AG04450 (cell line): ENCODE measurements at regions of chr12 and their contacts with region 1.

Region 1: GRCh38 chr12:92987362-92987761 is 58.3 kb upstream of the EEA1 start:
- DNase-seq: peak; percentile 55
- H3K4me3 ChIP-seq: no peak overlapping the region
- H3K27ac ChIP-seq: no peak overlapping the region
- H3K27me3 ChIP-seq: no peaks in the 10 kb centered on the region
- CTCF ChIP-seq: peak; percentile 58

Region 2: GRCh38 chr12:92178340-92178739 is 809.0 kb before region 1 on chr12:
- CTCF ChIA-PET with region 1: no interaction called
- POLR2A ChIA-PET with region 1: no interaction called
- DNase-seq: no peak
- H3K4me3 ChIP-seq: no peak overlapping the region
- H3K27ac ChIP-seq: no peak overlapping the region
- H3K27me3 ChIP-seq: no peaks in the 10 kb centered on the region
- CTCF ChIP-seq: no peak

Region 3: GRCh38 chr12:92784795-92785562 is 202.4 kb before region 1 on chr12:
- CTCF ChIA-PET with region 1: interaction called, 10 read pairs
- POLR2A ChIA-PET with region 1: no interaction called
- DNase-seq: peak; percentile 55
- H3K4me3 ChIP-seq: no peak overlapping the region
- H3K27ac ChIP-seq: peak overlapping the region; percentile 73
- H3K27me3 ChIP-seq: no peaks in the 10 kb centered on the region
- CTCF ChIP-seq: peak; percentile 56

Region 4: DNA sequence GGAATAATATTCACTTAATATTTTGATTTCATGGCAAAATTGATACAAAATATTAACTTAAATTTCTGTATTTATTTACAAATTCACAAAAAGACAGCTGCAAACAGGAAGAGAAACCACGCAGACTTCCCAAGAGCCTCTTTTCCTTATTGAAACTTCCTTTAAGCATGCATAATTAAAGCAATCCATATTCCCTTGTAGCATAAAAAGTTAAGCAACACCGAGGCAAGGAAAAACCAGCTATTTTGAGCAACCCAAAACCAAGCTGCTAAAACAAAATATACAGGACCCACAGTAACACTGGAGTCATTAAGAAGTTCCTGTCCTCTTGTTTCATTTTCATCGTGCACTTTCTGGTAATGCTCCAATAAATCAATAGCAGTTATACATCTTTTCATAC is 116.2 kb before region 1 on chr12:
- CTCF ChIA-PET with region 1: no interaction called
- POLR2A ChIA-PET with region 1: no interaction called
- DNase-seq: no peak
- H3K4me3 ChIP-seq: no peak overlapping the region
- H3K27ac ChIP-seq: no peak overlapping the region
- H3K27me3 ChIP-seq: no peaks in the 10 kb centered on the region
- CTCF ChIP-seq: no peak

Region 5: GRCh38 chr12:92973601-92974000 is 13.8 kb before region 1 on chr12:
- CTCF ChIA-PET with region 1: interaction called, 29 read pairs
- POLR2A ChIA-PET with region 1: interaction called, 3 read pairs
- DNase-seq: peak; percentile 64
- H3K4me3 ChIP-seq: no peak overlapping the region
- H3K27ac ChIP-seq: peak overlapping the region; percentile 48
- H3K27me3 ChIP-seq: no peaks in the 10 kb centered on the region
- CTCF ChIP-seq: no peak

Region 6: GRCh38 chr12:93127582-93128331 is 140.4 kb after region 1 on chr12:
- CTCF ChIA-PET with region 1: interaction called, 12 read pairs
- POLR2A ChIA-PET with region 1: no interaction called
- DNase-seq: peak; percentile 88
- H3K4me3 ChIP-seq: no peak overlapping the region
- H3K27ac ChIP-seq: peak overlapping the region; percentile 24
- H3K27me3 ChIP-seq: no peaks in the 10 kb centered on the region
- CTCF ChIP-seq: peak; percentile 62

Region 7: DNA sequence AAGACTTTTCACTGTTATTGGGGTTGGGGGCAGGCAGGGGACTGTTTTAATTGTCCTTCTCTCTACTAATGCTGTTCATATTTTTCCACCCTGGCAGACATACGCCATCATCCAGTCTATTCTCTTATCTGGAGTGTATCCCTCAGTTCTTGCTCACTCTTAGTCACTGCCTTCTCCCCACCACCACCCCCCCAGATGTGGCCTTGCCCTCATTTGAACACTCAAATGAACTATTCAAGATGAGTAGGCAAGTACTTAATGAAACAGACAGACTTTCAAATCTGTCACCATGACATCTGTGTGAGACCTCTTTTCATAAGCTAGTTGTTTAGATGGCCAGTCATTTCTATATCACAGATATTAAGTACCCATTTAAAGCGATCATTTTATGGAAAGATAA is 400.4 kb after region 1 on chr12:
- CTCF ChIA-PET with region 1: interaction called, 49 read pairs
- POLR2A ChIA-PET with region 1: interaction called, 3 read pairs
- DNase-seq: no peak
- H3K4me3 ChIP-seq: no peak overlapping the region
- H3K27ac ChIP-seq: peak overlapping the region; percentile 39
- H3K27me3 ChIP-seq: no peaks in the 10 kb centered on the region
- CTCF ChIP-seq: no peak

Region 8: DNA sequence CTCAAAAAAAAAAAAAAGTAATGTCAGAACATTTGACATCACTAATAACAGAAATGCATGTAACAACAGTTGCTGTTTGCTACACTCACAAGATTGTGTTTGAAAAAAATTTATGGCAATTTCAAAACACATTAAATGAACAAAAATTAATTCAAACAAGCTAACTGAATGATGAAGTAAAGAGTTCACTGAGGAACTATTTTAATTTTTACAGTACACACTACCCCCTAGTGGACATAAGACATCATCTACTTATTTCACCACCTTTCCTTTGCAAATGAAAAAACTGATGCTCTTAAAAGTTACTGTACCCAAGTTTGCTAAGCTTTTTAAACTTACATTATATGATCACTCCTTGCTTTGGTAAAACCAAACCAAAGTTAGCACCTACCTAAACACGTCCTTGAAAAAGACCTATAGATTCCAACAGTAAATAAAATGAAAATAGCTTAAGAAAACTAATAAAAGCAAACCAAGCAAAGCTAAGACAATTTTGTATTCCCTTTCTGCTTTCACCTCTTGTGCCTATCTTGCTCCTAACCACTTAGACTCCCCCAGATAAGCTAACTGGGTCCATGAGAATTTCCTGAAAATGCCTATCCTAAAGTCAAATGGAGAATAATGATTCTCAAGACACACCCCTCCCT is 432.1 kb after region 1 on chr12:
- CTCF ChIA-PET with region 1: interaction called, 131 read pairs
- POLR2A ChIA-PET with region 1: no interaction called
- DNase-seq: no peak
- H3K4me3 ChIP-seq: no peak overlapping the region
- H3K27ac ChIP-seq: no peak overlapping the region
- H3K27me3 ChIP-seq: no peaks in the 10 kb centered on the region
- CTCF ChIP-seq: peak; percentile 61